ENCODE measurements at regions of chr7 and their contacts with region 1.

Region 1: GRCh38 chr7:155702616-155703015 is 58.2 kb downstream of the RBM33 start:
- DNase-seq: no peak
- ATAC-seq: peak; percentile 30
- H3K4me3 Mint-ChIP-seq: no peak overlapping the region
- H3K27ac Mint-ChIP-seq: peak overlapping the region; percentile 4
- H3K4me1 Mint-ChIP-seq: peaks cover 32% of the 10 kb centered on the region
- H3K27me3 Mint-ChIP-seq: no peaks in the 10 kb centered on the region
- CTCF ChIP-seq: no peak

Region 2: GRCh38 chr7:155653803-155654202 is 48.8 kb before region 1 on chr7:
- CTCF ChIA-PET with region 1: no interaction called
- POLR2A ChIA-PET with region 1: no interaction called
- intact Hi-C with region 1: loop called (anchors 10 kb)
- DNase-seq: no peak
- ATAC-seq: no peak
- H3K4me3 Mint-ChIP-seq: no peak overlapping the region
- H3K27ac Mint-ChIP-seq: no peak overlapping the region
- H3K4me1 Mint-ChIP-seq: peaks cover 82% of the 10 kb centered on the region
- H3K27me3 Mint-ChIP-seq: no peaks in the 10 kb centered on the region
- CTCF ChIP-seq: no peak